Thyroid gland (tissue), 4 donors: ENCODE measurements at regions of chr6 and their contacts with region 1.

Region 1: DNA sequence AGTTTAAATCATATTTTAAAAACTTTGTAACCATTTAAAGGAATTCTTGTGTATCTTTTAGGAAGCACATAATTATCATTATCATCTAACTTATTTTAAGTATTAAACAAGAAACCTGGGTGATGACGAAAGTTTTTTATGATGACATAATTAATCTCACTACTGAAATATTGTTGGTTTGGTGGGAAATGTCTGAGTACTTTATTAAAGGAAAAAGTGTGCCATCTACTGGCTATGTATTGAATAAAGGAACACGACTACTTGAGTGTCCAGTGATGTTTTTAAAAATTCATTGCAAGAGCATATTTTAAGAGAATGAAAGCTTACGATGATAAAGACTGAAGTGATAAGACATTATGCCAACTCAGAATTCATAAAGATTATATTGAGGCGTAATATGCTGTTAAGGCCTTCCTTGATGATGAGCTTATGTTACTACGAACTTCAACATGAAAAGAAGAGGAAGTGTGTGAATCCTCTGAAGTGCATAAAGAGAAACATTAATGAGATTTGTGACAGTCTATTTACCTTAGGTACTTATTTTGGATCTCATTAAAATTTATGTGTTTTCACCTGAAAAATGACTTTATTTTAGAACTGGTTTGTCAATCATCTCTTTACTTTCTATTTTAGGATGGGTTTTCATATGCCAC is 12.0 kb upstream of the TRMT11 start:
- DNase-seq: no peak
- H3K4me3 ChIP-seq: no peak overlapping the region
- H3K27ac ChIP-seq: no peak overlapping the region
- H3K4me1 ChIP-seq: no peaks in the 10 kb centered on the region
- H3K27me3 ChIP-seq: no peaks in the 10 kb centered on the region
- CTCF ChIP-seq: peak in 4 of 6 experiments; percentile 34 to 70 (median 66)
- POLR2A ChIP-seq: no peak

Region 2: GRCh38 chr6:125301435-125302391 is 672.6 kb before region 1 on chr6 and contains the start of gene HDDC2:
- intact Hi-C with region 1: loop called (anchors 10 kb)
- DNase-seq: peak; percentile 67 to 71
- H3K4me3 ChIP-seq: peak within 1 kb of the TSS; percentile 52 to 77 (median 71)
- H3K27ac ChIP-seq: peak within 1 kb of the TSS; percentile 66 to 90 (median 70)
- H3K4me1 ChIP-seq: peaks cover 8 to 14% of the 10 kb centered on the region in 2 donors
- H3K27me3 ChIP-seq: no peaks in the 10 kb centered on the region
- CTCF ChIP-seq: no peak
- POLR2A ChIP-seq: peak in 1 of 2 donors; percentile 73
- total RNA-seq, gene HDDC2: 58.9 to 89.5 (median 78.9) TPM

Region 3: GRCh38 chr6:126112144-126112632 is 137.8 kb after region 1 on chr6:
- intact Hi-C with region 1: no loop called
- DNase-seq: no peak
- H3K4me3 ChIP-seq: no peak overlapping the region
- H3K27ac ChIP-seq: no peak overlapping the region
- H3K4me1 ChIP-seq: no peaks in the 10 kb centered on the region
- H3K27me3 ChIP-seq: no peaks in the 10 kb centered on the region
- CTCF ChIP-seq: no peak
- POLR2A ChIP-seq: no peak

Region 4: GRCh38 chr6:126143761-126144251 is 169.5 kb after region 1 on chr6:
- intact Hi-C with region 1: no loop called
- DNase-seq: no peak
- H3K4me3 ChIP-seq: no peak overlapping the region
- H3K27ac ChIP-seq: no peak overlapping the region
- H3K4me1 ChIP-seq: peaks cover 7% of the 10 kb centered on the region in 2 donors
- H3K27me3 ChIP-seq: no peaks in the 10 kb centered on the region
- CTCF ChIP-seq: no peak
- POLR2A ChIP-seq: no peak